Breast epithelium (tissue), 4 donors: ENCODE measurements at regions of chr19 and their contacts with region 1.

Region 1: DNA sequence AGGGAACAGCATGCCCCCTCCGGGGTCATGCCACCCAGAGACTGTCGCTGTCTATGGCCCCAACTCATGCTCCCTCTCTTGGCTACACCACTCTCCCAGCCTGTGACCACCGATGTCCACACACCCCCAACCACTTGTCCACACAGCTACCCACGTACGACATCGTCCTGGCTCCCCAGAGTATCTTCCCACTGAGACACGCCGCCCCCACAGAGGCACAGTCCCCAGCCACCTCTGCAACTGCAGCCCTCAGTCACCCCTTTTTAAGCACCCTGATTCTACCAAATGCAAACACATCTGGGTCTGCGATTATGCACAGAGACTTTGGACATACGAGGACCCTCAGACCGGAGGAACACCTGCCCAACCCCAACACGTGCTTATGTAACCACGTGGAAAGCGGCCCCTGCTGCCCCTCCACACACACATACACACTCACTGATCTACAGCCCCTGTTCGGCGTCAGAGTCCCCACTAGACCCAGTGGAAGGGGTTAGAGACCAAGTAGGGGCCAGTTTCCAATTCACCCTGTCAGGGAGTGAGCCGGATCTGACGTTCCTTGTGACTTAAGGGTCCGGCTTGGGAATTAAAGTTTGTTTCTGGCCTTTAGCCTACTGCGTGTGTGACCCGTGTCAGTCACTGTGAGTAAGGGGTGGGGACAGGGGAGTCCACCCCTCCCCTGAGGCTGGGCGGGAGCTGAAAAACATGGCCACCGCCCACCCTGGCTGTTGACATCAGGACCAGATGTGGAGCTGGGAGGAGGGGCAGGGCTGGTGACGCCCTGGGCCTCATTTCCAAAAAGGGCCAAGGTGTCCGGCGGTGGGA is 11.9 kb upstream of the AXL start:
- DNase-seq: no peak
- H3K4me3 ChIP-seq: peak overlapping the region; percentile 12 to 56 (median 20)
- H3K27ac ChIP-seq: peak overlapping the region; percentile 25 to 79
- H3K4me1 ChIP-seq: no peaks in the 10 kb centered on the region
- H3K27me3 ChIP-seq: no peaks in the 10 kb centered on the region
- CTCF ChIP-seq: no peak
- POLR2A ChIP-seq: no peak

Region 2: GRCh38 chr19:40750059-40750873 is 456.9 kb before region 1 on chr19 and contains the start of gene ACTMAP:
- intact Hi-C with region 1: no loop called
- DNase-seq: peak; percentile 100
- H3K4me3 ChIP-seq: peak within 1 kb of the TSS; percentile 62 to 86 (median 78)
- H3K27ac ChIP-seq: peak within 1 kb of the TSS; percentile 93 to 96
- H3K4me1 ChIP-seq: peaks cover 0 to 22% of the 10 kb centered on the region in 2 donors
- H3K27me3 ChIP-seq: no peaks in the 10 kb centered on the region
- CTCF ChIP-seq: peak in 2 of 3 donors; percentile 12 to 18
- POLR2A ChIP-seq: peak; percentile 79
- total RNA-seq, gene ACTMAP: 2.6 to 3.2 (median 2.9) TPM

Region 3: GRCh38 chr19:41264581-41265394 is 57.6 kb after region 1 on chr19:
- intact Hi-C with region 1: loop called (anchors 5 kb)
- DNase-seq: peak; percentile 54 to 56
- H3K4me3 ChIP-seq: peak overlapping the region; percentile 73 to 99 (median 91)
- H3K27ac ChIP-seq: peak overlapping the region; percentile 98 to 100
- H3K4me1 ChIP-seq: peaks cover 0 to 12% of the 10 kb centered on the region in 2 donors
- H3K27me3 ChIP-seq: no peaks in the 10 kb centered on the region
- CTCF ChIP-seq: no peak
- POLR2A ChIP-seq: no peak